Endothelial cell of umbilical vein (primary cell): ENCODE measurements at regions of chr2 and their contacts with region 1.

Region 1: GRCh38 chr2:190759749-190760213 is 110.9 kb downstream of the NAB1 start:
- DNase-seq: peak; percentile 87
- H3K4me3 ChIP-seq: no peak overlapping the region
- H3K27ac ChIP-seq: peak overlapping the region; percentile 65
- H3K4me1 ChIP-seq: peaks cover 10% of the 10 kb centered on the region
- H3K27me3 ChIP-seq: no peaks in the 10 kb centered on the region
- CTCF ChIP-seq: no peak
- POLR2A ChIP-seq: no peak

Region 2: DNA sequence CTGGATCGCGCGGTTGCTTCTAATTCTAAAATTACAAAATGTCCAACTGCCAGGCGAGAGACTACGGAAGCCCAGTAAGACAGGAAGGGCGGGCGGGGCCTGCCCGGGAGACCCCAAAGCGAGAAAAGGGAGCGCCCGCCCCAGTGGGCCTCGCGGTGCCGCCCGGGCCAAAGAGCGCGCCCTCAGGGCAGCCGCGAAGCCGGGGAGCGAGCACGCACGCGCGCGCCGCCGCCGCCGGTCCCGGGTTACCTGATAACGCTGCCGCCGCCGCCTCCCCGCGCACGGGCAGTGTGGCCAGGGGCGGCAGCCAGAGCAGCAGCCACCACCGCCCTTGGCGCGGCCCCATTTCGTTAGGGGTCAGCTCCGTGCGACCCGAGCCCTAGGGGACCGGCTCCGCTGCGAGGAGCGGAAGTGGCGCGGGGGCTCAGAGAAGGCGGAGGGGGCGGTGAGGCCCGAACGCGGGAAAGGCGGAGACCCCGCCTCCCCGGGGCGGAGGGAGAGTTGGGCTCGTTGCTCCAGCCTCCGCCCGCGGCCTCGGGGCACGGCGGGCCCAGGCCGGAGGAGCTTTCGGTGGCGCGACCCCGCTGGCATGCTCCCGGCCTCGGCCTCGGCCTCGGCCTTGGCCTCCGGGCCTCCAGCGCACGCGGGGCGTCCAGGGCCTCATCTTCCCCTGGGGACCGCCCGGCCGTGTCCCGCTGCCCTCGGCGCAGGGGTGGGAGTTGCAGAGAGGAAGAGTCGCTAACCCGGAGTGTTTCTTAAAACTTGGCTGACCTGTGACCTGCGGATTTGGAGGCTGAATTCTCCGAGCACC is 225.3 kb before region 1 on chr2 and contains the start of gene NEMP2:
- CTCF ChIA-PET with region 1: no interaction called
- POLR2A ChIA-PET with region 1: no interaction called
- dilution Hi-C with region 1: no loop called
- intact Hi-C with region 1: loop called (anchors 5 kb)
- DNase-seq: peak; percentile 61
- H3K4me3 ChIP-seq: peak within 1 kb of the TSS; percentile 63 to 85 (median 66)
- H3K27ac ChIP-seq: peak within 1 kb of the TSS; percentile 3
- H3K4me1 ChIP-seq: peaks cover 9% of the 10 kb centered on the region
- H3K27me3 ChIP-seq: no peaks in the 10 kb centered on the region
- CTCF ChIP-seq: no peak
- POLR2A ChIP-seq: peak; percentile 59
- total RNA-seq, gene NEMP2: 3.8 and 8.4 TPM in 2 replicates

Region 3: DNA sequence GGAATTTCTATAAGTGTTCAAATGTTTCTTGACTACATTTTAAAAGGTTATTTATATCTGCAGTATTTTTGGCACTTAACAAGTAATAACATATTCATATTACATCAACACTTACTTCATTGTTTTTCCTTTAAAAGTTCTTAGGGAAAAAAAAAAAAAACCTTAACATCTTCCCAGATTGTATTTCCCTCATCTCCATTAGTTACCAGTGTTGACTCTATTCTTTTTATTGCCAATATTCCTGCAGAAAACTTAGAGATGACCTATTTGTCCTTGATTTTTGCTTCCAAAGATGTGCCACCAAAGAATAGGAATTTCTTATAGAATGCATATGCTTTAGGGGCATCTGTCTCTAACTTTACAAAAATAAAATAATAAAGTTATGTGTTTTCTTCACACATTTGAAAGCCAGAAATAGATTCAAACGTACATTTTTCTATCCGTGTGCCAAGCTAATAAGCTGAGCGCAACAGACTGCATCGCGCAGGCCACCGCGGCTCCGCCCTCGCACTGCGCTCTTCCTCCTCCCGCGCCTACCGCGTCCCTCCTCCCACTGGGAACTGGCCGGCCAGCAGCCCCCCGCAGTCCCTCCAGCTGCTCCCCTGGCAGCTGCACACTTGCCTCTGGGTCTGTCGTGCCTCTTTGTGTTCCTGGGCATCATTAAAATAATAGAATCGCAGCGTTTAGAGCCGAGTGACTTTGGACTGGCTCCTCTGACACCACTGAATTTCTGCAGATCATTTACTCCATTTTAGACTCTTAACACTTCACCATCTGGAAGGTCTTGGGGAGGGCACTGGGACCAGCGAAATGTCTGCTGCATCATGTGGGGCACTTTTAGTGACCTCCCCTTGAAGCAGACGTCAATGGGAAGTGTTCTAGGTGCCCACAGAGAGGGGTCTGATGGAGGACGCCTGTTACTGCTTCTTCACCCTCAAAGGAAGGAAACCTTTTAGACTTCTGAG is 132.1 kb before region 1 on chr2:
- CTCF ChIA-PET with region 1: no interaction called
- POLR2A ChIA-PET with region 1: no interaction called
- dilution Hi-C with region 1: no loop called
- intact Hi-C with region 1: loop called (anchors 1 kb)
- DNase-seq: peak; percentile 23
- H3K4me3 ChIP-seq: peak overlapping the region; percentile 33 to 47 (median 35)
- H3K27ac ChIP-seq: no peak overlapping the region
- H3K4me1 ChIP-seq: peaks cover 3% of the 10 kb centered on the region
- H3K27me3 ChIP-seq: no peaks in the 10 kb centered on the region
- CTCF ChIP-seq: no peak
- POLR2A ChIP-seq: no peak

Region 4: DNA sequence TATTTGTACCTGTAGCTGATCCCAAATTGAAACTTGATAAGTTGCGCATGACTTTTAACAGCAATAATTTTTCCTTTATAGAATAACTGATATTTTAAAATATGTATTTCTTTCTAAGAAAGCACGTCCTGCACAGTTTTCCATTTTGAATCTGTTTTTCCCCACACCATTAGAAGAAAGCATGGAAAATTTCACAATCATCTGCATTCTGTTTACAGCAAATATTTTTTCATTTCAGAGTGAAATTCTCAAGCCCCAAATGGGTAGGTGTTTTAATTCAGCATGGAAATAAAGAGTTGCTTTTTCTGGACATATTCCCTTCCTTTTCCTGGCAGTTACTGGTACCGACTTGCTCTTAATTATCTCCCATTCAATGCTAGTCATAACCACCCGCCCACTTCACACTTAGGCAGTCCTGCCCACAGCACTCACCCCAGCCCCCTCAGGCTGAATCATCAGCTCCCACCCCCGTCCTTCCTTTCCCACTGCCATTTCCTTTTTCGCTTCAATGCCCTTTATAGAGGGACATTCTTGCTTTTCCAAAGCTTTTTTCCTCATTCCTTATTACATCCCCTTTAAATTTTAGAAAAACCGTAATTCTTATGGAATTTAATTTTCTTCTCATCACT is 31.7 kb after region 1 on chr2:
- CTCF ChIA-PET with region 1: no interaction called
- POLR2A ChIA-PET with region 1: no interaction called
- dilution Hi-C with region 1: no loop called
- intact Hi-C with region 1: no loop called
- DNase-seq: peak; percentile 93
- H3K4me3 ChIP-seq: peak overlapping the region in 1 of 3 experiments; percentile 49
- H3K27ac ChIP-seq: peak overlapping the region; percentile 92
- H3K4me1 ChIP-seq: peaks cover 45% of the 10 kb centered on the region
- H3K27me3 ChIP-seq: no peaks in the 10 kb centered on the region
- CTCF ChIP-seq: no peak
- POLR2A ChIP-seq: no peak